ENCODE measurements at regions of chr4 and their contacts with region 1.

Region 1: DNA sequence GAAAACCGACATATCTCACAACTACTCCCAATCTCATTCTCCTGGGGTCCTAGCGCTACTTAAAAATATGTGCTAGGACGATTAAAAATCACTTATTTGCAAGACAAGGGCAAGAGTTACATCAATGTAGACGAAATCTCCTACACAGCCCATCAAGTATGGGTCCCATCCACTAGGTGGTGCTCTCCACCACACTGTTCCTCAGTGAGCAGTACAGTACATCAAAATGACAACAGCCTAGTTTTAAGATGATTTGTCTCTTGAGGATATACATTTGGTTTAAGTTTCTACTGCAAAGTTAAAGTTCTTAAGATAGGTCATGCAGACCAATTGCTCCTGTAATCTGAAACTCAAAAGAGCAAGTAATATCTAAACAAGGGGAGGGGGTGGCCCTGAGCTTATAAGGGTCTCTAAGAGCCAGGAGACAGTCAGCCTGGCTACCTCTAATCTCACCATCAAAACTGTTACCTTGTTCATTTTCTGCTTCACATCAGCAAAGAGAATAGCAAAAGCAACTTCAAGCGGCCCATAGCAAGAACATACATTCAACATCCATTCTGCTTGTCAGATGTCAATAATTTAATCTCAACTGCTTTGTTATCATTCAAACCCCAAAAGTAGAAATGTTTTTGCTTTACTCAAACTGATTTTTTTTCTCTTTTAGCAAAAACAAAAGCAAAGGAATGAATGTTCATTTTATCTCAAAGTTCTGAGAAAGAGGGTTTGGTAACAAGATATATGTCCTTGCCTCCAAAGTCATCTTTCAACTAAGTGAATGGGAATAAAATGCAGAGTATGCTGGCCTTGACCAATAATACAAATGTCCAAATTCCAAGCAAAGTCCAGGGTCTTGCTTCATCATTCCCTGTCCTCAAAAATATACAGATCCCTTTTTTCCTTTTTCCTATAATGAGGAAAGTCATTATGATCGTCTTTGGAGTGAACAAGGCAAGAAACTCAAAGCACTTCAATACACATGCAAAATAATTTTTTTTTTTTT is 53.1 kb downstream of the STX18 start:
- DNase-seq: peak; percentile 75
- H3K4me3 Mint-ChIP-seq: no peak overlapping the region
- H3K27ac Mint-ChIP-seq: no peak overlapping the region
- H3K4me1 Mint-ChIP-seq: peaks cover 6% of the 10 kb centered on the region
- H3K27me3 Mint-ChIP-seq: no peaks in the 10 kb centered on the region
- CTCF ChIP-seq: peak; percentile 74

Region 2: GRCh38 chr4:4507923-4508322 is 19.2 kb after region 1 on chr4:
- CTCF ChIA-PET with region 1: interaction called, 10 read pairs
- POLR2A ChIA-PET with region 1: no interaction called
- intact Hi-C with region 1: no loop called
- DNase-seq: peak; percentile 18
- H3K4me3 Mint-ChIP-seq: no peak overlapping the region
- H3K27ac Mint-ChIP-seq: no peak overlapping the region
- H3K4me1 Mint-ChIP-seq: no peaks in the 10 kb centered on the region
- H3K27me3 Mint-ChIP-seq: no peaks in the 10 kb centered on the region
- CTCF ChIP-seq: peak; percentile 35

Region 3: DNA sequence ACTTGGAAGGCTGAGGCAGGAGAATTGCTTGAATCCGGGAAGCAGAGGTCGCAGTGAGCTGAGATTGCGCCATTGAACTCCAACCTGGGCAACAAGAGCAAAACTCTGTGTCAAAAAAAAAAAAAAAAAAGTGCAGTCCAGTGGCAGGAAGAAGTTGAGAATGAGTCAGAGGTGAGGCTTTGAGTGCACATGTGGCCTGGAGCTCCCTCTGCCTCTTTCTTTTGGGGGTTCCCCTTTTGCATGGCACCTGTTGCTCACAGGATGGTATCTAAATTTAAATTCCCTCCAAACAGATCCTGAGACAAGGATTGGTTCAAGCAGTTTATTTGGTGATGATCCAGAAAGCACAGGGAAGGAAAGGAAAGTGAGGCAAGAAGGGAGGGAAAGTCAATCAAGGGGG is 204.6 kb after region 1 on chr4:
- CTCF ChIA-PET with region 1: no interaction called
- POLR2A ChIA-PET with region 1: no interaction called
- intact Hi-C with region 1: loop called (anchors 1 kb)
- DNase-seq: peak; percentile 81
- H3K4me3 Mint-ChIP-seq: no peak overlapping the region
- H3K27ac Mint-ChIP-seq: no peak overlapping the region
- H3K4me1 Mint-ChIP-seq: peaks cover 10% of the 10 kb centered on the region
- H3K27me3 Mint-ChIP-seq: no peaks in the 10 kb centered on the region
- CTCF ChIP-seq: peak; percentile 17

Region 4: DNA sequence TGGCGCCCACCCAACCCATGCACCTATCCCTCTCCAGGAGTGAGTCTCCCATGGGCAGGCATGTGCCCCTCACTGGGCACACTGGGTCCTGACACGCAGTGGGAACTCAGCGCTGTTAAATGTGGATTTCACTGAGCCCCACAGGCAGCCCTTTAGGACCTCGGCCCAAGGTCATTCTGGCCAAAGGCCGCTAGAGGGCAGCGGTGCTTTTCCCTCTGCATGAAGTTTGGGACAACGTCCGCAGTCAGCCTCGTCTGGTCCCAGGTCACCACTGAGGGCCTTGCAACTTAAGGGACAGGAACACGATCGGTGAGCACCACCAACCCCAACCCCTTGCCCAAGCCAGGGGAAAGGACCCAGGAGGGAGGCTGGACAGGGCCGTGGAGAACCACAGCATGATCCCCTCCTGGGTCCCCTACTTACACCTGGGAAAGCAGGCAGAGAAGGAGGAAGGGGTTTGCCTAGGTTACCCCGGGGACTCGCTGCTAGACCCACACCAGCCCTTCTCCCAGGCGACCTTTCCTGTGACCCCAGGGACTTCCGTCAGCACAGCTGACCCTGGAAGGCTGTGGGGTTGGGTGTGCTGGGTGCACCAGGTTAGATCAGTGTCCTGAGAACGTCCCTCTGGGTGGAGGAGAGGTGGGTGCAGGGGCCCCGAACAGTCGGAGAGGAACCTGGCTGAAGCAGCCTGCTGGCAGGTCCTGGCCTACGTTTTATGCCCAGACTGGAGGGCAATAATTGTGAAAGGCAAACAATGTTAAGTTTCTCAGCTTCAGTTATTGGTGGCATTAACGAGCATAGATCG is 506.6 kb after region 1 on chr4:
- CTCF ChIA-PET with region 1: interaction called, 3 read pairs
- POLR2A ChIA-PET with region 1: no interaction called
- intact Hi-C with region 1: loop called (anchors 1 kb)
- DNase-seq: peak; percentile 79
- H3K4me3 Mint-ChIP-seq: no peak overlapping the region
- H3K27ac Mint-ChIP-seq: no peak overlapping the region
- H3K4me1 Mint-ChIP-seq: peaks cover 28% of the 10 kb centered on the region
- H3K27me3 Mint-ChIP-seq: peaks cover 40% of the 10 kb centered on the region
- CTCF ChIP-seq: peak; percentile 93

Region 5: GRCh38 chr4:5798462-5798861 is 1309.8 kb after region 1 on chr4:
- CTCF ChIA-PET with region 1: no interaction called
- POLR2A ChIA-PET with region 1: no interaction called
- intact Hi-C with region 1: loop called (anchors 10 kb)
- DNase-seq: no peak
- H3K4me3 Mint-ChIP-seq: no peak overlapping the region
- H3K27ac Mint-ChIP-seq: no peak overlapping the region
- H3K4me1 Mint-ChIP-seq: no peaks in the 10 kb centered on the region
- H3K27me3 Mint-ChIP-seq: no peaks in the 10 kb centered on the region
- CTCF ChIP-seq: no peak